BJ (cell line): ENCODE measurements at regions of chr19 and their contacts with region 1.

Region 1: DNA sequence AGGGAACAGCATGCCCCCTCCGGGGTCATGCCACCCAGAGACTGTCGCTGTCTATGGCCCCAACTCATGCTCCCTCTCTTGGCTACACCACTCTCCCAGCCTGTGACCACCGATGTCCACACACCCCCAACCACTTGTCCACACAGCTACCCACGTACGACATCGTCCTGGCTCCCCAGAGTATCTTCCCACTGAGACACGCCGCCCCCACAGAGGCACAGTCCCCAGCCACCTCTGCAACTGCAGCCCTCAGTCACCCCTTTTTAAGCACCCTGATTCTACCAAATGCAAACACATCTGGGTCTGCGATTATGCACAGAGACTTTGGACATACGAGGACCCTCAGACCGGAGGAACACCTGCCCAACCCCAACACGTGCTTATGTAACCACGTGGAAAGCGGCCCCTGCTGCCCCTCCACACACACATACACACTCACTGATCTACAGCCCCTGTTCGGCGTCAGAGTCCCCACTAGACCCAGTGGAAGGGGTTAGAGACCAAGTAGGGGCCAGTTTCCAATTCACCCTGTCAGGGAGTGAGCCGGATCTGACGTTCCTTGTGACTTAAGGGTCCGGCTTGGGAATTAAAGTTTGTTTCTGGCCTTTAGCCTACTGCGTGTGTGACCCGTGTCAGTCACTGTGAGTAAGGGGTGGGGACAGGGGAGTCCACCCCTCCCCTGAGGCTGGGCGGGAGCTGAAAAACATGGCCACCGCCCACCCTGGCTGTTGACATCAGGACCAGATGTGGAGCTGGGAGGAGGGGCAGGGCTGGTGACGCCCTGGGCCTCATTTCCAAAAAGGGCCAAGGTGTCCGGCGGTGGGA is 11.9 kb upstream of the AXL start:
- DNase-seq: no peak
- H3K4me3 ChIP-seq: no peak overlapping the region
- H3K27me3 ChIP-seq: no peaks in the 10 kb centered on the region
- CTCF ChIP-seq: no peak

Region 2: GRCh38 chr19:41031649-41032328 is 175.3 kb before region 1 on chr19:
- CTCF ChIA-PET with region 1: no interaction called
- POLR2A ChIA-PET with region 1: no interaction called
- DNase-seq: no peak
- H3K4me3 ChIP-seq: no peak overlapping the region
- H3K27me3 ChIP-seq: 0 out of 2 replicates have a peak, but pooled peaks cover 2% of the 10 kb centered on the region
- CTCF ChIP-seq: no peak

Region 3: GRCh38 chr19:41192574-41193429 is 14.3 kb before region 1 on chr19 and contains the start of gene CYP2S1:
- CTCF ChIA-PET with region 1: interaction called, 13 read pairs
- POLR2A ChIA-PET with region 1: no interaction called
- DNase-seq: no peak
- H3K4me3 ChIP-seq: peak within 1 kb of the TSS; percentile 32
- H3K27me3 ChIP-seq: peaks cover 5% of the 10 kb centered on the region; the same call in 1 of the 2 replicates
- CTCF ChIP-seq: no peak
- polyA plus RNA-seq, gene CYP2S1: 0.27 and 0.53 TPM in 2 replicates

Region 4: GRCh38 chr19:41226053-41226873 is 19.1 kb after region 1 on chr19:
- CTCF ChIA-PET with region 1: interaction called, 27 read pairs
- POLR2A ChIA-PET with region 1: no interaction called
- DNase-seq: peak; percentile 26
- H3K4me3 ChIP-seq: peak overlapping the region; percentile 31
- H3K27me3 ChIP-seq: no peaks in the 10 kb centered on the region
- CTCF ChIP-seq: no peak

Region 5: GRCh38 chr19:41263850-41264580 is 56.9 kb after region 1 on chr19 and contains the start of gene HNRNPUL1:
- CTCF ChIA-PET with region 1: interaction called, 125 read pairs
- POLR2A ChIA-PET with region 1: no interaction called
- DNase-seq: peak; percentile 100
- H3K4me3 ChIP-seq: peak within 1 kb of the TSS; percentile 91
- H3K27me3 ChIP-seq: no peaks in the 10 kb centered on the region
- CTCF ChIP-seq: peak; percentile 40; the same call in 1 of the 2 replicates
- polyA plus RNA-seq, gene HNRNPUL1: 35.4 and 37.9 TPM in 2 replicates

Region 6: GRCh38 chr19:41276231-41276630 is 69.1 kb after region 1 on chr19:
- CTCF ChIA-PET with region 1: interaction called, 3 read pairs
- POLR2A ChIA-PET with region 1: interaction called, 10 read pairs
- DNase-seq: no peak
- H3K4me3 ChIP-seq: no peak overlapping the region
- H3K27me3 ChIP-seq: no peaks in the 10 kb centered on the region
- CTCF ChIP-seq: no peak